ENCODE measurements at regions of chr14 and their contacts with region 1.

Region 1: DNA sequence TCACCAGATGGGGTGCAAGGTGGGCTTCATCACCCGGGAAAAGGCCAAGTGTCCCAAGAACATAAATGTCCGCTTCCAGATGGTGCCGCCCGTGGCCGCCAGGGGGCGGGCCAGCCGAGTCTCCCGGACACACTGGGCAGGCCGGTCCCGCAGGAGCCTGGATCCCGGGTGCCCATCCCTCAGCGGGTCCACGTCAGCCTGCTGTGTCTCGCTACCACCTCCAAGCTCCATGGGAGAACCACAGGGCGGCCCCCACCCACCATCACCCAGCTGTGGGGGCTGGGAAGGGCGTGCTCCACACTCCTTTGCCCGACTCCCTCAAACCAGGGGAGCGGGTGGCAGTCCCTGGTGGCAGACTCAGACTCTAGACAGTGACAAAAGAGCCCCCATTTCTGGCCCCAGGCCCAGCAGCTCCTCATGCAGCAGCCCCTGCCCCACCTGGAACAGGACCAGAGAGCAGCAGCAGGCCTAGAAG is 22.0 kb upstream of the NUDT14 start:
- DNase-seq: peak; percentile 34 to 77 (median 63)
- ATAC-seq: peak; percentile 45
- H3K4me3 ChIP-seq: no peak overlapping the region
- H3K4me3 Mint-ChIP-seq: no peak overlapping the region
- H3K27ac ChIP-seq: no peak overlapping the region
- H3K27ac Mint-ChIP-seq: no peak overlapping the region
- H3K4me1 ChIP-seq: peaks cover 25% of the 10 kb centered on the region
- H3K4me1 Mint-ChIP-seq: peaks cover 18% of the 10 kb centered on the region
- H3K27me3 ChIP-seq: peaks cover 0 to 10% of the 10 kb centered on the region in 2 experiments
- H3K27me3 Mint-ChIP-seq: peaks cover 22% of the 10 kb centered on the region
- CTCF ChIP-seq: peak; percentile 93

Region 2: DNA sequence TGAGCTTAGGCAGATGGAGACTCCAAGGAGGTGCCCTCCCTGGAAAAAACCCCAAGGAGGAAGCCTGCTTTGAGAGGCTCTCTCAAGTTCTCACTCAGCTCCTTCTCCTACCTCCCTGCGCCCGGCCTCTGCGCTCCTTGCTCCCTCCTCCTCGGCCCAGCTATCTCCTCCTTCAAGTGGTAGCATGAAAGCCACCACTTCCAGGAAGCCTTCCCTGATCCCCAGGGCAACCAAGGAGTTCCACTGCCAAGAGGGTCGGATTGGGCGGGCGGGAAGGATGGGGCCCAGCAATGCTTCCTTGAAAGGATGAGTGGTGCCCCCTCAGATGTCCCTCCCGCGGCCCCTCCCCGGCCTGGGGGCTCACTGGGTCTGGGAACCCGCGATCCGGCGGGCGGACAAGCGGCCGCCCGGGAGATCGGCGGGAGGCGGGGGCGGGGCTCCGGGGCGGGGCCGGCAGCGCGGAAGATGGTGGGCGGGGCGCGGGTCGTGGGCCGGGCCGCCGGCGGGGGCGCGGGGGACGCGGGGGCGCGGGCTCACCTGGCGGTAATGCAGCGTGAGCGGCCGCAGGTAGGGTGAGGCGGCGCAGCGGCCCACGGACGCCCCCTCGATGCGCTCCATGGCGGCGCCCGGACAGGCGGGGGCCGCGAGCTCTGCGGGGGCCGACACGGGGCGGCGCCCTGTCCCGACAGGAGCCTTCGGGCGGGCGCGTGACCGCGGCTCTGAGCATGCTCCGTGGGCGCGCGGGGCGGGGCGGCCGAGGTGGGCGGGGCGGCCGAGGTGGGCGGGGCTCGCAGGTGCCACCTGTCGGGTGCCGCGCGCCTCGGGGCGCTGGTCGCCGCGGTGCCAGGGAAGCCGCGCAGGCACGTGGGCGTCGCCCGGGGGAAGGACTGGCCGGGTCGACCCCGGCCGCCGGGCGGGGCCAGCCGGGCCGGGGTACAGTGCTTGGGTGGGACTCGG is 22.2 kb before region 1 on chr14 and contains the start of gene NUDT14:
- CTCF ChIA-PET with region 1: no interaction called
- POLR2A ChIA-PET with region 1: no interaction called
- intact Hi-C with region 1: no loop called
- DNase-seq: peak; percentile 77 to 95 (median 86)
- ATAC-seq: peak; percentile 94
- H3K4me3 ChIP-seq: peak within 1 kb of the TSS; percentile 36 to 37
- H3K4me3 Mint-ChIP-seq: peak within 1 kb of the TSS; percentile 76
- H3K27ac ChIP-seq: no peak within 1 kb of the TSS
- H3K27ac Mint-ChIP-seq: no peak within 1 kb of the TSS
- H3K4me1 ChIP-seq: peaks cover 25% of the 10 kb centered on the region
- H3K4me1 Mint-ChIP-seq: peaks cover 16% of the 10 kb centered on the region
- H3K27me3 ChIP-seq: no peaks in the 10 kb centered on the region
- H3K27me3 Mint-ChIP-seq: no peaks in the 10 kb centered on the region
- CTCF ChIP-seq: no peak
- total RNA-seq, gene NUDT14: 5.7 to 6.2 TPM

Region 3: DNA sequence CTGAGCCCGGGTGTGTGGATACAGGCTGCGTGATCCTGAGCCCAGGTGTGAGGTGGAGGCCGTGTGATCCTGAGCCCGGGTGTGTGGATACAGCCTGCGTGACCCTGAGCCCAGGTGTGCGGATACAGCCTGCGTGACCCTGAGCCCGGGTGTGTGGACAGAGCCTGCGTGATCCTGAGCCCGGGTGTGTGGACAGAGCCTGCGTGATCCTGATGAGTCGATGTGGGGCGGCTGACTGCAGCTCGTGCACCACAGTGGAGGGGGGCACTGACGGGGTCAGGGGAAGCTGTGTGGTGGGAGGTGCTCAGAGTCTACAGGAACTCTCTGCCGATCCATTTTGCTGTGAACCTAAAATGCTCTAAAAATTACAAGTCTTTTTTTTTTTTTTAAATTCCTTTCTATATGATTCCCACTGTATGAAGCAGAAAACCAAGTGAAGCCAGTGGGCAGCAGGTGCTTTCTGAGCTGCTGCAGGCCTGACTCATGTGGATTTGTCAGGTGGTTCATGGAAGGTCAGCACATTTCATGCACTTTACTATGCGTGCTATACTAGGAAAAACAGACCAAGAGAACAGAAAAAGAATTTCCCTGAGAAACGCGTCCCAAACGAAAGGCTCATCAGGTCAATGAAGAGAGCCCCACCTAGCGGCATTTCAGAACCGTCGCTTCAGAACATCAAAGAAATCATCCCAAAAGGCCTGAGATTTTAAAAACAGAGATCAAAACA is 78.4 kb after region 1 on chr14:
- CTCF ChIA-PET with region 1: no interaction called
- POLR2A ChIA-PET with region 1: no interaction called
- intact Hi-C with region 1: loop called (anchors 5 kb)
- DNase-seq: peak in 4 of 9 experiments; percentile 19 to 66 (median 40)
- ATAC-seq: no peak
- H3K4me3 ChIP-seq: no peak overlapping the region
- H3K4me3 Mint-ChIP-seq: no peak overlapping the region
- H3K27ac ChIP-seq: no peak overlapping the region
- H3K27ac Mint-ChIP-seq: no peak overlapping the region
- H3K4me1 ChIP-seq: peaks cover 16% of the 10 kb centered on the region
- H3K4me1 Mint-ChIP-seq: peaks cover 25% of the 10 kb centered on the region
- H3K27me3 ChIP-seq: no peaks in the 10 kb centered on the region
- H3K27me3 Mint-ChIP-seq: no peaks in the 10 kb centered on the region
- CTCF ChIP-seq: peak; percentile 32

Region 4: DNA sequence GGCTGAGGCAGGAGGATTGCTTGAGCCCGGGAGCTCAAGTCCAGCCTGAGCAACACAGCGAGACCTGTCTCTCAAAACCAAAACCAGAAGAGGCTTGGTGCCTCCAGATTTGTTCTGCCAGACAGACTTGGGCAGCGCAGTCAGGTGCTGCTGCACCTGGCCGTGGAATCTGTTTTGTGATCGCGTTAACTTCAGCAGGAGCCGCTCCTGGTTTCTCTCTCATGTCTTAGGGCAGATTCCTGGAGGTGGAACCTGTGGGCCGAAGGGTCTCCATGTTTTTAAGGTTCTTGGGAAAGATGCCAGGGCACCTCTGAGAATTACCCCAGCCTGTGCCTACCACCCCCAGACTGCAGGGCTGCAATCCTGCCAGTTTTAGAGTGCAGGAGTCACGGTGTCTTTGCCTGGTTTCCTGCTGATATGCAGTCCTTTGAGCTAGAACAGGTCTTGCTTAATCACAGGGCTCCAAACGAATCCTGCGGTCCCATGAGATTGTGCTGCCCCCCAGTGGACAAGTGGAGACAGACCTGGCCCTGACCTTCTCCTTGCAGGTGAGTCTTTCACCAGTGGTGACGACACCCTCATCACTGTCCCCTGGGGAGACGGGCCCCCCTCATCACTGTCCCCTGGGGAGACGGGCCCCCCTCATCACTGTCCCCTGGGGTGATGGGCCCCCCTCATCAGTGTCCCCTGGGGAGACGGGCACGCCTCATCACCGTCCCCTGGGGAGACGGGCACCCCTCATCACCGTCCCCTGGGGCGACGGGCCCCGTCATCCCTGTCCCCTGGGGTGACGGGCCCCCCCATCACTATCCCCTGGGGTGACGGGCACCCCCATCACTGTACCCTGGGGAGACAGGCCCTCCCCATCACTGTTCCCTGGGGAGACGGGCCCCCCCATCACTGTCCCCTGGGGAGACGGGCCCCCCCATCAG is 149.1 kb after region 1 on chr14:
- CTCF ChIA-PET with region 1: interaction called, 28 read pairs
- POLR2A ChIA-PET with region 1: no interaction called
- intact Hi-C with region 1: loop called (anchors 1 kb)
- DNase-seq: peak; percentile 80 to 93 (median 87)
- ATAC-seq: peak; percentile 99
- H3K4me3 ChIP-seq: no peak overlapping the region
- H3K4me3 Mint-ChIP-seq: no peak overlapping the region
- H3K27ac ChIP-seq: no peak overlapping the region
- H3K27ac Mint-ChIP-seq: no peak overlapping the region
- H3K4me1 ChIP-seq: peaks cover 4% of the 10 kb centered on the region
- H3K4me1 Mint-ChIP-seq: peaks cover 3% of the 10 kb centered on the region
- H3K27me3 ChIP-seq: no peaks in the 10 kb centered on the region
- H3K27me3 Mint-ChIP-seq: no peaks in the 10 kb centered on the region
- CTCF ChIP-seq: peak; percentile 76

Measured in CD8-positive, alpha-beta T cell (primary cell).